Posterior vena cava (tissue), 2 donors: ENCODE measurements at regions of chr17 and their contacts with region 1.

Region 1: GRCh38 chr17:77696721-77697460 is 261.6 kb upstream of the TNRC6C start:
- DNase-seq: no peak

Region 2: GRCh38 chr17:77666881-77667395 is 30.0 kb before region 1 on chr17:
- intact Hi-C with region 1: loop called in 1 of 2 experiments (anchors 1 kb)
- DNase-seq: no peak

Region 3: DNA sequence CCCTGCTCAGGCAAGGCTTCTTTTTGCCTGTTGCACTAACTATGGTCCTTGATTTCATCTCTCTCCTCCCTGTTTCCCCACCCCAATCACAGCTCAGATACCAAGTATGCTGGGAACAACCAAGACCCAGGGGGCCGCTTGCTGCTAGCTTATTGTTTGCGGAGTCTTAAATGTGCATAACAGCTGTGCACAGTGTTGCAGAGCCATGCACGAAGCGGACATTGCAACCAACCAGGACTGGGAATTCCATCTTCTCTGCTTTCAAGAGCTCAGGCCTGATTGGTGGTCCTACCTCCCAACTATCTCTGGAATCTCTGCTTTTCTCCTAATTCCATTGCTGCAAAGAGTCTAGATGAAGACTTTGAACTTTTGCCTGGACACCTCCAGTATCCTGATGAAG is 19.7 kb before region 1 on chr17:
- intact Hi-C with region 1: no loop called
- DNase-seq: no peak

Region 4: DNA sequence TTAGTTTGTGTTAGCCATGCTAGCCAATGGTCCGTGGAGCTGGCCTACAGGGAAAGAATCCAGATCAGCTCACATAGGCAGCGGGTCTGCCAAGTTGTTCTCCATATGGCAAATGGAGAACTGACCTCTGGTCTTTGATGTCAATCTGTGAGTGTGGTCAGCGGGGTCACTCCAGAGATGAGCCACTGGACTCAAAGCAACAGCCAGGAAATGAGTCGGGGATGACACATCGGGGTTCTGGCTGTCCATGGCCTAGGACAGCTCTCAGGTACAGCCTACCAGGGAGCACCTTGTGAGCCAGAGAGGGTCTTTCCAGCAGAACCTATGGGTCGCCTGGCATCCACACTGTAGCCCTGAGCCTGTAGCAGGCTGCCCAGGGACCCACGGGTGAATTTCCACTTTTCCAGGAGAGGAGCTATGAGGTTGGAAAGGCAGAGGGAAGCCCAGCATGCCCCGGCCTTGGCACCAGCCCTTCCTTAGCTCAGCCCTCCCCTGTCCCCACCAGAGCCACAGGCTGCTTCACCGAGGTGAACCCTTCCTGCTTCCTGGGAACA is 58.6 kb after region 1 on chr17:
- intact Hi-C with region 1: no loop called
- DNase-seq: no peak